Activated CD8-positive, alpha-beta memory T cell treated with anti-CD3 and anti-CD28 coated beads, Interleukin-2, amount 10 ng/mL, durations not matched to agents 7 days and 5 days (primary cell): ENCODE measurements at regions of chr19 and their contacts with region 1.

Region 1: GRCh38 chr19:49118565-49119410 is at the start of gene C19orf73:
- DNase-seq: peak; percentile 95
- ATAC-seq: peak; percentile 82
- H3K4me3 Mint-ChIP-seq: peak within 1 kb of the TSS; percentile 73
- H3K27ac Mint-ChIP-seq: peak within 1 kb of the TSS; percentile 81
- H3K4me1 Mint-ChIP-seq: peaks cover 28% of the 10 kb centered on the region
- H3K27me3 Mint-ChIP-seq: peaks cover 22% of the 10 kb centered on the region
- total RNA-seq, gene C19orf73: 1.6 to 1.8 TPM

Region 2: GRCh38 chr19:49106648-49107135 is 12.1 kb before region 1 on chr19:
- CTCF ChIA-PET with region 1: interaction called, 17 read pairs
- DNase-seq: peak; percentile 69
- ATAC-seq: peak; percentile 74
- H3K4me3 Mint-ChIP-seq: no peak overlapping the region
- H3K27ac Mint-ChIP-seq: no peak overlapping the region
- H3K4me1 Mint-ChIP-seq: no peaks in the 10 kb centered on the region
- H3K27me3 Mint-ChIP-seq: no peaks in the 10 kb centered on the region

Region 3: DNA sequence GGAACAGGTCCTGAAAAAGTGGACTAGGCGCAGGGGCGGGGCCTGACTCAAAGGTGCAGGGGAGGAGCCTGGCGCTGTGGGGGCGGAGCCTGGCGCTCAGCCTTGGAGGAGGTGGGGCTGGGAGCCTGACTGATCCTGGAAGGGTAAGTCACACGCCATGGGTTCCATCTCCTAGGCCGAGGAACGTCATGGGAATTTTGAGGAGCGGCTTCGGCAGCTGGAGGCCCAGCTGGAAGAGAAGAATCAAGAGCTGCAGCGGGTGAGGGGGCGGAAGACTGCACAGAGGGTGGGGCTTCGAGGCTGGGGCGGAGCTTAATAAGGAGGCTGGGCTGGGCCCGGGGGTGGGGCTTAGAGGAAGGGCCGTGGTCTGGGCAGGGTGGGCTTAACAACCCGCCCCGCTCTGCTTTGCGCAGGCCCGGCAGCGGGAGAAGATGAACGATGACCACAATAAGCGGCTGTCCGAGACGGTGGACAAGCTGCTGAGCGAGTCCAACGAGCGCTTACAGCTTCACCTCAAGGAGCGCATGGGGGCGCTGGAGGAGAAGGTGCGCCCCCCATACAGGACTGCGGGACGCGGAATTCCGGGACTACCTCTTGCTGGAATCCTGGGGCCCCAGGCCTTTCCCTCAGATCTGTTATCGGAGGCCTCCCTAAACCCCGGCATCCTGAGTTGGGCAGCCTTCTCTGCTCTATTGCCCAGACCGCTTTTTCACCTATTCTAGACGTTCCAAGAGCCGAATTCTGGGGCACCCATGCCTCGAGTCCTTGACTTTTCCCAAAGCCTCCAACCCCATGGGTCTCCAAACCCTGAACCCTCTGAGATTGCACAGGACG is 15.1 kb after region 1 on chr19:
- CTCF ChIA-PET with region 1: interaction called, 14 read pairs
- DNase-seq: peak; percentile 66
- ATAC-seq: peak; percentile 80
- H3K4me3 Mint-ChIP-seq: peak overlapping the region; percentile 53
- H3K27ac Mint-ChIP-seq: no peak overlapping the region
- H3K4me1 Mint-ChIP-seq: peaks cover 9% of the 10 kb centered on the region
- H3K27me3 Mint-ChIP-seq: peaks cover 6% of the 10 kb centered on the region

Region 4: GRCh38 chr19:49148784-49149651 is 30.2 kb after region 1 on chr19:
- CTCF ChIA-PET with region 1: interaction called, 23 read pairs
- DNase-seq: peak; percentile 91
- ATAC-seq: peak; percentile 54
- H3K4me3 Mint-ChIP-seq: peak overlapping the region; percentile 28
- H3K27ac Mint-ChIP-seq: no peak overlapping the region
- H3K4me1 Mint-ChIP-seq: peaks cover 32% of the 10 kb centered on the region
- H3K27me3 Mint-ChIP-seq: peaks cover 60% of the 10 kb centered on the region

Region 5: DNA sequence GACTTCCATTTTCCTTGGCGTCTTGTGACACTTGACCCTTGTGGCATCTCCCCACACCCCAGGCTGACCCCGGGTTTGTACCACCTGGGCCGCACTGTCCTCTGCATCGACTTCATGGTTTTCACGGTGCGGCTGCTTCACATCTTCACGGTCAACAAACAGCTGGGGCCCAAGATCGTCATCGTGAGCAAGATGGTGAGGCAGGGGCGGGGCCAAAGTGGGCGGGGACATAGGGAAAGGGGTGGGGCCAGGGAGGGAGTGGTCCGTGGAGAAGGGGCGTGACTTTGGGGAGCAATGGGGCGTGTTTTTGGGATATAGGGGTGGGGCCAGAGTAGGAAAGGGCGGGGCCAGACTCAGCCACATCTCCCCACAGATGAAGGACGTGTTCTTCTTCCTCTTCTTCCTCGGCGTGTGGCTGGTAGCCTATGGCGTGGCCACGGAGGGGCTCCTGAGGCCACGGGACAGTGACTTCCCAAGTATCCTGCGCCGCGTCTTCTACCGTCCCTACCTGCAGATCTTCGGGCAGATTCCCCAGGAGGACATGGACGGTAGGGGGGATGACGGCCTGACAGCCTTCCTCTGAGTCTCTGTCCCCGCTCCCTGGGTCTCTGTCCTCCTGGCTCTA is 81.6 kb after region 1 on chr19:
- CTCF ChIA-PET with region 1: interaction called, 14 read pairs
- DNase-seq: no peak
- ATAC-seq: no peak
- H3K4me3 Mint-ChIP-seq: no peak overlapping the region
- H3K27ac Mint-ChIP-seq: no peak overlapping the region
- H3K4me1 Mint-ChIP-seq: peaks cover 6% of the 10 kb centered on the region
- H3K27me3 Mint-ChIP-seq: peaks cover 7% of the 10 kb centered on the region